ENCODE measurements at regions of chrX and their contacts with region 1.

Region 1: GRCh38 chrX:40140706-40141499 is 43.1 kb upstream of the BCOR start:
- DNase-seq: no peak
- ATAC-seq: peak; percentile 64 to 75; a peak in 4 of 6 replicates
- H3K4me3 ChIP-seq: no peak overlapping the region
- H3K27ac ChIP-seq: peak overlapping the region; percentile 66 to 78; a peak in 5 of 6 replicates
- H3K4me1 ChIP-seq: peaks cover 18% of the 10 kb centered on the region
- CTCF ChIP-seq: no peak
- EP300 ChIP-seq: no peak
- POLR2A ChIP-seq: no peak
- RAD21 ChIP-seq: no peak

Region 2: GRCh38 chrX:40153335-40154249 is 12.7 kb after region 1 on chrX:
- CTCF ChIA-PET with region 1: interaction called, 11 read pairs
- POLR2A ChIA-PET with region 1: interaction called, 14 read pairs
- DNase-seq: peak; percentile 35 to 41
- ATAC-seq: peak; percentile 10 to 28; a peak in 5 of 6 replicates
- H3K4me3 ChIP-seq: peak overlapping the region; percentile 64
- H3K27ac ChIP-seq: peak overlapping the region; percentile 98 to 99
- H3K4me1 ChIP-seq: peaks cover 19% of the 10 kb centered on the region
- CTCF ChIP-seq: peak; percentile 14; the same call in 1 of the 3 replicates
- EP300 ChIP-seq: no peak
- POLR2A ChIP-seq: peak; percentile 21; the same call in 1 of the 2 replicates
- RAD21 ChIP-seq: 0 out of 5 replicates have a peak, but pooled peaks of 1 of the 2 experiments have one; percentile 5